IMR-90 (cell line): ENCODE measurements at regions of chr6 and their contacts with region 1.

Region 1: GRCh38 chr6:163866192-163866591 is 451.7 kb downstream of the QKI start:
- DNase-seq: no peak
- ATAC-seq: no peak
- H3K4me3 ChIP-seq: no peak overlapping the region
- H3K27ac ChIP-seq: no peak overlapping the region
- H3K4me1 ChIP-seq: 0 out of 2 replicates have a peak, but pooled peaks cover 2% of the 10 kb centered on the region
- H3K27me3 ChIP-seq: no peaks in the 10 kb centered on the region
- CTCF ChIP-seq: no peak
- POLR2A ChIP-seq: no peak
- RAD21 ChIP-seq: no peak

Region 2: GRCh38 chr6:163438940-163439335 is 427.3 kb before region 1 on chr6:
- CTCF ChIA-PET with region 1: no interaction called
- POLR2A ChIA-PET with region 1: no interaction called
- dilution Hi-C with region 1: no loop called
- in situ Hi-C with region 1: no loop called
- intact Hi-C with region 1: loop called (anchors 5 kb)
- DNase-seq: no peak
- ATAC-seq: no peak
- H3K4me3 ChIP-seq: no peak overlapping the region
- H3K27ac ChIP-seq: no peak overlapping the region
- H3K4me1 ChIP-seq: peaks cover 2% of the 10 kb centered on the region; the same call in 1 of the 2 replicates
- H3K27me3 ChIP-seq: no peaks in the 10 kb centered on the region
- CTCF ChIP-seq: no peak
- POLR2A ChIP-seq: no peak
- RAD21 ChIP-seq: no peak

Region 3: GRCh38 chr6:163679753-163680152 is 186.4 kb before region 1 on chr6:
- CTCF ChIA-PET with region 1: no interaction called
- POLR2A ChIA-PET with region 1: no interaction called
- dilution Hi-C with region 1: no loop called
- in situ Hi-C with region 1: no loop called
- intact Hi-C with region 1: no loop called
- DNase-seq: peak; percentile 7
- ATAC-seq: no peak
- H3K4me3 ChIP-seq: no peak overlapping the region
- H3K27ac ChIP-seq: no peak overlapping the region
- H3K4me1 ChIP-seq: no peaks in the 10 kb centered on the region
- H3K27me3 ChIP-seq: peaks cover 2% of the 10 kb centered on the region; the same call in 1 of the 2 replicates
- CTCF ChIP-seq: no peak
- POLR2A ChIP-seq: no peak
- RAD21 ChIP-seq: no peak

Region 4: GRCh38 chr6:163711615-163712565 is 154.3 kb before region 1 on chr6:
- CTCF ChIA-PET with region 1: no interaction called
- POLR2A ChIA-PET with region 1: no interaction called
- dilution Hi-C with region 1: no loop called
- in situ Hi-C with region 1: no loop called
- intact Hi-C with region 1: no loop called
- DNase-seq: no peak
- ATAC-seq: no peak
- H3K4me3 ChIP-seq: no peak overlapping the region
- H3K27ac ChIP-seq: no peak overlapping the region
- H3K4me1 ChIP-seq: 0 out of 2 replicates have a peak, but pooled peaks cover 1% of the 10 kb centered on the region
- H3K27me3 ChIP-seq: peaks cover 4% of the 10 kb centered on the region
- CTCF ChIP-seq: no peak
- POLR2A ChIP-seq: no peak
- RAD21 ChIP-seq: no peak

Region 5: GRCh38 chr6:164025180-164025579 is 159.0 kb after region 1 on chr6:
- CTCF ChIA-PET with region 1: no interaction called
- POLR2A ChIA-PET with region 1: no interaction called
- dilution Hi-C with region 1: no loop called
- in situ Hi-C with region 1: no loop called
- intact Hi-C with region 1: no loop called
- DNase-seq: no peak
- ATAC-seq: no peak
- H3K4me3 ChIP-seq: no peak overlapping the region
- H3K27ac ChIP-seq: no peak overlapping the region
- H3K4me1 ChIP-seq: no peaks in the 10 kb centered on the region
- H3K27me3 ChIP-seq: no peaks in the 10 kb centered on the region
- CTCF ChIP-seq: no peak
- POLR2A ChIP-seq: no peak
- RAD21 ChIP-seq: no peak